Tibial artery (tissue), 4 donors: ENCODE measurements at regions of chr11 and their contacts with region 1.

Region 1: DNA sequence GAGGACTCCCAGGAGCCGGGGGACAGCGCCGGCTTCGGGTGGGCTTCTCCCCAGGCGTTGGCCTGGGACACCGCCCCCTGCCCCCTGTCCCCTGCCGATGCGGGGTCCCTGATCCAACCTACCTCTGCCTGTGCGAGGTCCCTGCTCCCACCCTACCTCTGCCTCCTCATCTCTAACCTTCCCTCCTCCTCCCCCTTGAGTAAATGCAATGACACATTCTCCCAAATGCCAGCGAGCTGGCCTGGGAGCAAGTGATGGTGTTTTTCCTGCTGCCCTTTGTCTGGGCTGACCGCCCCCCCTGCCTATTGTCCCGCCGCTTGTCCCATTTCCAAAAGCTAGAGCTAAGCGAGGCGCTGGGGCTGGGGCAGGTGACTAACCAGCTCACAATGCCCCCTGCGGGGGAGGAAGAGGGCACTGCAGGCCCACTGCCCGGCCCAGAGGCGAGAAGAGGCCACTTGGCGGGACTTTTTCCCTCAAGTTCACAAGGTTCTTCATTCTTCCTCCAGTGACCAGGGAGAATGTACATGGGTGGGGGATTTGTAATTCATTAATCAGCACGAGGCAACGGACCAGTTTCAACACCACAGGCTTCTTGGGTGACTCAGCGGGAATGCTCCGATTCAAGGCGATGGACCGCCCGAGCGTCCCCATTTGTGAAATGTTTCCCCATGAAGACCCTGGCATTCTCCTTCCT is 674 bp upstream of the CLCF1 start:
- DNase-seq: peak; percentile 90 to 94
- H3K4me3 ChIP-seq: peak overlapping the region; percentile 70 to 81
- H3K27ac ChIP-seq: peak overlapping the region; percentile 92 to 93
- H3K4me1 ChIP-seq: peaks cover 6 to 46% (median 38%) of the 10 kb centered on the region in 4 donors
- H3K27me3 ChIP-seq: peaks cover 0 to 4% of the 10 kb centered on the region in 2 donors
- CTCF ChIP-seq: peak; percentile 52 to 62

Region 2: DNA sequence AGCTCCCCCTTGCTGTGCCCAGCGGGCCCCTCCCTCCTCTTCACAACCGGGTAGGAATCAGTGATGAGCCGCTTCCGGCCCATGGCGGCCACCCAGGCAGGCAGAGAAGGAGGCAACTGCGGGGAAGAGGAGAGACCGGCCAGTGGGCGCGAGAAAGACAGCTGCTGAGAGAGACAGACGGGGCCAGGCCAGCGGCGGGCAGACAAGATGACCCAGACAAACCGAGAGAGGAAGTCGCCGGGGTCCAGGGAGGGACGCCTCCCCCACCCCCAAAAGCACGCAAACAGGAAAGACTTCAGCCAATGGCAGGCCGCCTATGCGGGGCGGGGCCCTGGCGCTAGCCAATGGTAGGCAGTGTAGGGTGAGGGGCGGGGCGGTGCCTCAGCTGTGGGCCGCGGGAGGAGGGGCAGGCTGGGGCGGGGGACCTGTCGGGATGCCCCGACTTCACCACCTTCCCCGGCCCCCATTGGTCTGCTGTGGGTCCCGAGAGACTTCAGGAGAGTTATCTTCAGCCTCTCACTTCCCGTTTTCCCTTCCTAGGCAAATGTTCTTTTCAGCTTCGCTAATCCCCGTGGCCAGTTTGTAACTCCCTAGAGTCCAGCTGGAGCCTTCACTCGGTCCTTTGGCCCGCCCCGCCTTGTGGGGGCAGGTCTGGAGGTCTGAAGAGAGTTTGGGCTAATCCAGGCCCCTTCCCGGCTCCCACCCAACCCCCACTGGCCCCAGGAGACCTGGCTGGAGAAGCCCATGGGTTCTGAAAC is 20.6 kb before region 1 on chr11 and contains the start of gene POLD4:
- intact Hi-C with region 1: loop called (anchors 2 kb)
- DNase-seq: peak; percentile 99 to 100
- H3K4me3 ChIP-seq: peak within 1 kb of the TSS; percentile 65 to 85
- H3K27ac ChIP-seq: peak within 1 kb of the TSS; percentile 96 to 97
- H3K4me1 ChIP-seq: peaks cover 8 to 72% (median 60%) of the 10 kb centered on the region in 4 donors
- H3K27me3 ChIP-seq: no peaks in the 10 kb centered on the region
- CTCF ChIP-seq: peak in 1 of 2 experiments; percentile 4